Transverse colon (tissue), 4 donors: ENCODE measurements at regions of chr1 and their contacts with region 1.

Region 1: GRCh38 chr1:104238991-104239390 is 489.3 kb downstream of the AMY1C start:
- DNase-seq: no peak
- H3K4me3 ChIP-seq: no peak overlapping the region
- H3K27ac ChIP-seq: no peak overlapping the region
- H3K4me1 ChIP-seq: no peaks in the 10 kb centered on the region
- H3K27me3 ChIP-seq: no peaks in the 10 kb centered on the region
- CTCF ChIP-seq: no peak
- EP300 ChIP-seq: no peak
- POLR2A ChIP-seq: no peak

Region 2: DNA sequence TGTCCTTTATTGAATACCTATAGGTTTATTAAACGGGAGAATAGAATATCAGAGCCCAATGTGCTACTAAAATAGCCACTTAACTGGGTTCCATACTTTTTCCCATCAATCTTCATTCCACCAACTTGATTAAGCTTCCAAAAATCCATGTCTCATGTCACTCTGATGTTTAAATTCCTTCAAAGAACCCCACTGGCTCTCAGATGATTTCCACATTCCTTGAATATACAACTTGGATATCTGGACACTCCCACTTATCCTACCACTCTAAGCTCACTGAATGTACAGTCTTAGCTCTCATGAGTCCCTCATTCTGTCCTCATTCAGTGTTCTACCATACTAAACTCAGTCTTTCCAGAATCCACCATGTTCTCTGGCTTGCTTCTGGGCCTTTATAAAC is 1151.7 kb before region 1 on chr1:
- in situ Hi-C with region 1: no loop called
- intact Hi-C with region 1: no loop called
- DNase-seq: no peak
- H3K4me3 ChIP-seq: no peak overlapping the region
- H3K27ac ChIP-seq: no peak overlapping the region
- H3K4me1 ChIP-seq: no peaks in the 10 kb centered on the region
- H3K27me3 ChIP-seq: no peaks in the 10 kb centered on the region
- CTCF ChIP-seq: no peak
- EP300 ChIP-seq: no peak
- POLR2A ChIP-seq: no peak

Region 3: GRCh38 chr1:104266612-104267011 is 27.6 kb after region 1 on chr1:
- in situ Hi-C with region 1: no loop called
- intact Hi-C with region 1: loop called (anchors 2 kb)
- DNase-seq: no peak
- H3K4me3 ChIP-seq: no peak overlapping the region
- H3K27ac ChIP-seq: no peak overlapping the region
- H3K4me1 ChIP-seq: no peaks in the 10 kb centered on the region
- H3K27me3 ChIP-seq: no peaks in the 10 kb centered on the region
- CTCF ChIP-seq: no peak
- EP300 ChIP-seq: no peak
- POLR2A ChIP-seq: no peak